AG04450 (cell line): ENCODE measurements at regions of chr17 and their contacts with region 1.

Region 1: DNA sequence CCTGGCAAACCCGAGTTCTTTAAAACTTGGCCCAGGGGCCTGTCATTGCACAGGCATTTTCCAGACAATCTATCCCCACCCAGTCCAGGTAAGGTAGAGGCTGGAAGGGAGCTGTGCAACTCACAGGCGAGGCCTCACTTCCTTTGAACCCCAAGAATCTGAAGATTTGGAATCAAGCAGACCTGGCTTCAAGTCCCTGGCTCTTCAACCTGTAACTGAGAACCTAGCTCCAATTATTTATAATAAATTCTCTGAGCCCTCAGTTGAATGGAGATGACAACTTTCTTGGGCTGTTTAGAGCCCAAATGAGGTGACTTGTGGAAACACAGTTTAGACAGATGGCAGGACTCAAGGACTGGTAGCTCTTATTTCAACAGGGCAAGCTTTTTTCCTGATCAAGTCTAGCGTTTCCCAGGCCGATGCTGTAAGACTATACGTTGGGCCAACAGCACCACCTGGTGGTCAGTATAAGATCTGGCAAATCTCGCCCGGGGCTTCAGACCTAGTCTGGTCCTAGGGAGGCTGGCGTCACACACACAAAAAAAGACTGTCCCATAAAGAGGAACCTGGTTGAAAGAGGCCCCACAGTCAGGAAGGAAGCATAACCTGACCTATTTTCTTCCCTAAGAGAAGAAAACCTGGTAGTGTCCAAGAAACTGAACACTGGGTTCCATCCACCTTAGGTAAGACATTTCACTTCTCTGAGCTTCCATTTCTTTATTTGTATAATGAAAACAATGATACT is 117.9 kb downstream of the C17orf67 start:
- DNase-seq: peak; percentile 62
- H3K4me3 ChIP-seq: no peak overlapping the region
- H3K27ac ChIP-seq: no peak overlapping the region
- H3K27me3 ChIP-seq: no peaks in the 10 kb centered on the region
- CTCF ChIP-seq: peak; percentile 83

Region 2: GRCh38 chr17:56499799-56500388 is 215.9 kb before region 1 on chr17:
- CTCF ChIA-PET with region 1: interaction called, 28 read pairs
- POLR2A ChIA-PET with region 1: no interaction called
- DNase-seq: no peak
- H3K4me3 ChIP-seq: no peak overlapping the region
- H3K27ac ChIP-seq: no peak overlapping the region
- H3K27me3 ChIP-seq: no peaks in the 10 kb centered on the region
- CTCF ChIP-seq: peak; percentile 50

Region 3: GRCh38 chr17:56549501-56549900 is 166.3 kb before region 1 on chr17:
- CTCF ChIA-PET with region 1: no interaction called
- POLR2A ChIA-PET with region 1: no interaction called
- DNase-seq: no peak
- H3K4me3 ChIP-seq: no peak overlapping the region
- H3K27ac ChIP-seq: no peak overlapping the region
- H3K27me3 ChIP-seq: no peaks in the 10 kb centered on the region
- CTCF ChIP-seq: no peak

Region 4: GRCh38 chr17:56592487-56593085 is 123.2 kb before region 1 on chr17:
- CTCF ChIA-PET with region 1: interaction called, 272 read pairs
- POLR2A ChIA-PET with region 1: interaction called, 14 read pairs
- DNase-seq: no peak
- H3K4me3 ChIP-seq: peak overlapping the region; percentile 67
- H3K27ac ChIP-seq: no peak overlapping the region
- H3K27me3 ChIP-seq: peaks cover 37% of the 10 kb centered on the region
- CTCF ChIP-seq: peak; percentile 59

Region 5: GRCh38 chr17:56679115-56679766 is 36.5 kb before region 1 on chr17:
- CTCF ChIA-PET with region 1: interaction called, 55 read pairs
- POLR2A ChIA-PET with region 1: no interaction called
- DNase-seq: no peak
- H3K4me3 ChIP-seq: peak overlapping the region; percentile 34
- H3K27ac ChIP-seq: no peak overlapping the region
- H3K27me3 ChIP-seq: peaks cover 32% of the 10 kb centered on the region
- CTCF ChIP-seq: peak; percentile 73

Region 6: GRCh38 chr17:56754523-56755208 is 38.9 kb after region 1 on chr17:
- CTCF ChIA-PET with region 1: interaction called, 27 read pairs
- POLR2A ChIA-PET with region 1: no interaction called
- DNase-seq: no peak
- H3K4me3 ChIP-seq: no peak overlapping the region
- H3K27ac ChIP-seq: peak overlapping the region; percentile 31
- H3K27me3 ChIP-seq: no peaks in the 10 kb centered on the region
- CTCF ChIP-seq: no peak

Region 7: GRCh38 chr17:56786989-56787482 is 71.3 kb after region 1 on chr17:
- CTCF ChIA-PET with region 1: interaction called, 45 read pairs
- POLR2A ChIA-PET with region 1: no interaction called
- DNase-seq: peak; percentile 91
- H3K4me3 ChIP-seq: no peak overlapping the region
- H3K27ac ChIP-seq: peak overlapping the region; percentile 79
- H3K27me3 ChIP-seq: no peaks in the 10 kb centered on the region
- CTCF ChIP-seq: no peak

Region 8: DNA sequence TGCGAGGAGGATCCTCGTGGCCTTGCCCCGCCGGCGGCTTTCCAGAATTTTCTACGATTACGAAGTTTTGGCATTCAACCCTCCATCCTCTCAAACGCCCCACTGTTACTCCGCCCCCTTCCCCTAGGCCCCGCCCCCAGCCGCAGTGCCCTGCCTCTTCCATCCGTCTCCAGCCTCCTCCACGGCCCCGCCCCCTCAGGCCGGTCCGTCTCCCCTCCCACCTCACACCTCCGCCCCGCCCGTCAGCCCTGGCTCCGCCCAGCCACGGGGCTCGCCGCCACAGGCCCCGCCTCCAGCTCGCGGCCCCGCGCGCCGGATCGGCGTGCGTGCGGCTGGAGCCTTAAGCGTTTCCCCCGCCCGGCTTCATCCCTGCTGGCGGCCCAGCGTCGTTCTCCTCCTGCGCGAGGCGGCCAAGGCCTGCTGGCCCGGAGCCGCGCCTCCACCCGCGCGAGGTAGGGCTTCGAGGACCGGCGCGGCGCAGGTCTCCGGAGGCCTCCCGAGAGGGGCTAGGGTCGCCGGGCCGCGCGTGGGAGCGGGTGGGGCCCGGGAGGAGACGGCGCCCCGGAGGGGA is 118.1 kb after region 1 on chr17 and contains the starts of genes C17orf67 and DGKE:
- CTCF ChIA-PET with region 1: no interaction called
- POLR2A ChIA-PET with region 1: no interaction called
- DNase-seq: peak; percentile 88
- H3K4me3 ChIP-seq: peak within 1 kb of the TSS; percentile 89
- H3K27ac ChIP-seq: peak within 1 kb of the TSS; percentile 41
- H3K27me3 ChIP-seq: no peaks in the 10 kb centered on the region
- CTCF ChIP-seq: no peak
- polyA plus RNA-seq, gene C17orf67: 0.42 and 0.76 TPM in 2 replicates
- polyA plus RNA-seq, gene DGKE: 2.3 and 3.2 TPM in 2 replicates

Region 9: DNA sequence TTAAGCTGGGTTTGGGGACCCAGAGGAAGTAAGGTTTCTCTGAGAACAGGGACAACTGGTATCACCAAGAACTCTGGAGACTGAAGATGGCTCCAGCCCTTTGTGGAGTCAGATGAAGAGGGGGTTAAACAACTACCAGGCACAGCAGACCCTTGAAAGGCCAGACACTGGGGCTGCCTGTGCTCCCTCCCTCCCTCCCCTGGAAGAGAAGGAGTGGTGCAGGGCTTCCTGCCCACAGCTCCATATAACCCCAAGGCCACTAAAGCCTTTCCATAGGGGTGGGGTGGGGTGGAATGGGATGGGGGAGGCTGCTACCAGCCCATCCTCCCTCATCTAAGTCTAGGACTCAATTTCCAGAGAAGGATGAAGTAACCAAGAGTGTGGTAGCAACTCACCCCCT is 962.6 kb after region 1 on chr17:
- CTCF ChIA-PET with region 1: no interaction called
- POLR2A ChIA-PET with region 1: no interaction called
- DNase-seq: no peak
- H3K4me3 ChIP-seq: no peak overlapping the region
- H3K27ac ChIP-seq: no peak overlapping the region
- H3K27me3 ChIP-seq: no peaks in the 10 kb centered on the region
- CTCF ChIP-seq: no peak